Activated T-helper 1 cell treated with anti-CD3 and anti-CD28 coated beads, Interleukin-12 subunit alpha, Interleukin-12 subunit beta, Interleukin-2, Interleukin-4 antibody, amounts not matched to agents 30 ng/mL and 10 ng/mL and 1 ng/mL, durations not matched to agents 14 hours and 24 hours and 36 hours (primary cell): ENCODE measurements at regions of chr10 and their contacts with region 1.

Region 1: DNA sequence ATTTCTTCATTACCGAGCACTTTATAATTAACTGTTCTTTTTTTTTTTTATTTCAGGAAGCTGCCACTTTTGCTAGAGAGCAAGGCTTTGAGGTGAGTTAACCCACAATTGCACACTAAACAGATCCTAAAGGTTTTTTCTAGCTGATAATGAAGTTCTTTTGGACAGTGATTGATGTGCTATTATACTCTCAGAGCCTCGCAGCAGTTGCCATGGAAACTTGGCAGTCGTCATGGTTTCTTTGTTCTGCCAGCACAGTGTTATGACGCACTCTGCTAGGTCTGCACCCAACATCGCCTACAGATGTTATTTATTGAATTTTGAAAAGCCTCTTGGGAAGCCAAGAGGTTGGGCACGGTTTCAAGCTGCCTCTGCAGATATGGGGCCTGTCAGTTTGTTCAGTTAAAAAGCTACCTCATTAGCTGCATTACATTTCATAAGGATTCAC is 237.2 kb upstream of the KAT6B start:
- DNase-seq: peak; percentile 75
- H3K4me3 Mint-ChIP-seq: peak overlapping the region; percentile 54
- H3K27ac Mint-ChIP-seq: peak overlapping the region; percentile 91
- H3K4me1 Mint-ChIP-seq: peaks cover 74% of the 10 kb centered on the region
- H3K27me3 Mint-ChIP-seq: no peaks in the 10 kb centered on the region

Region 2: DNA sequence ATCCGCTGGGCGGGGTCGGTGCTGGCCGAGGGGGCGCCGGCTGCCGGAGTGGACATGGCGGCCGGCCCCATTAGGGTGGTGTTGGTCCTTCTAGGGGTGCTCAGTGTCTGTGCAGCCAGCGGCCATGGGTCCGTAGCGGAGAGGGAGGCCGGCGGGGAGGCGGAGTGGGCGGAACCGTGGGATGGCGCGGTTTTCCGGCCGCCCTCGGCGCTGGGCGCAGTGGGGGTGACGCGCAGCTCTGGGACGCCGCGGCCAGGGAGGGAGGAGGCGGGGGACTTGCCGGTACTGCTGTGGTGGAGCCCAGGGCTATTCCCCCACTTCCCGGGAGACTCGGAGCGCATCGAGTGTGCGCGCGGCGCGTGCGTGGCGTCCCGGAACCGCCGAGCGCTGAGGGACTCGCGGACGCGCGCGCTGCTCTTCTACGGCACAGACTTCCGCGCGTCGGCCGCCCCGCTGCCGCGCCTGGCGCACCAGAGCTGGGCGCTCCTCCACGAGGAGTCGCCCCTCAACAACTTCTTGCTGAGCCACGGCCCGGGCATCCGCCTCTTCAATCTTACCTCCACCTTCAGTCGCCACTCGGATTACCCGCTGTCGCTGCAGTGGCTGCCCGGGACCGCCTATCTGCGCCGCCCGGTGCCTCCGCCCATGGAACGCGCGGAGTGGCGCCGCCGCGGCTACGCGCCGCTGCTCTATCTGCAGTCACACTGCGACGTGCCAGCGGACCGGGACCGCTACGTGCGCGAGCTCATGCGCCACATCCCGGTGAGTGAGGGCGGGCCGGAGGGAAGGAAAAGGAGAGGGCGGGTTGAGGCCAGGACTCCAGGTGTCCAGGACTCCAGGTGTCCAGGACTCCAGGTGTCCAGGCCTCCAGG is 816.7 kb before region 1 on chr10:
- intact Hi-C with region 1: loop called (anchors 5 kb)
- DNase-seq: peak; percentile 85
- H3K4me3 Mint-ChIP-seq: peak overlapping the region; percentile 94
- H3K27ac Mint-ChIP-seq: peak overlapping the region; percentile 91
- H3K4me1 Mint-ChIP-seq: peaks cover 67% of the 10 kb centered on the region
- H3K27me3 Mint-ChIP-seq: no peaks in the 10 kb centered on the region

Region 3: GRCh38 chr10:74262856-74263255 is 326.4 kb before region 1 on chr10:
- intact Hi-C with region 1: loop called (anchors 2 kb)
- DNase-seq: no peak
- H3K4me3 Mint-ChIP-seq: no peak overlapping the region
- H3K27ac Mint-ChIP-seq: no peak overlapping the region
- H3K4me1 Mint-ChIP-seq: peaks cover 13% of the 10 kb centered on the region
- H3K27me3 Mint-ChIP-seq: no peaks in the 10 kb centered on the region

Region 4: GRCh38 chr10:74799721-74800221 is 210.5 kb after region 1 on chr10:
- intact Hi-C with region 1: loop called (anchors 1 kb)
- DNase-seq: peak; percentile 2
- H3K4me3 Mint-ChIP-seq: peak overlapping the region; percentile 3
- H3K27ac Mint-ChIP-seq: peak overlapping the region; percentile 61
- H3K4me1 Mint-ChIP-seq: peaks cover 13% of the 10 kb centered on the region
- H3K27me3 Mint-ChIP-seq: no peaks in the 10 kb centered on the region

Region 5: GRCh38 chr10:75019370-75019769 is 430.1 kb after region 1 on chr10:
- intact Hi-C with region 1: loop called (anchors 2 kb)
- DNase-seq: no peak
- H3K4me3 Mint-ChIP-seq: no peak overlapping the region
- H3K27ac Mint-ChIP-seq: no peak overlapping the region
- H3K4me1 Mint-ChIP-seq: peaks cover 43% of the 10 kb centered on the region
- H3K27me3 Mint-ChIP-seq: no peaks in the 10 kb centered on the region

Region 6: DNA sequence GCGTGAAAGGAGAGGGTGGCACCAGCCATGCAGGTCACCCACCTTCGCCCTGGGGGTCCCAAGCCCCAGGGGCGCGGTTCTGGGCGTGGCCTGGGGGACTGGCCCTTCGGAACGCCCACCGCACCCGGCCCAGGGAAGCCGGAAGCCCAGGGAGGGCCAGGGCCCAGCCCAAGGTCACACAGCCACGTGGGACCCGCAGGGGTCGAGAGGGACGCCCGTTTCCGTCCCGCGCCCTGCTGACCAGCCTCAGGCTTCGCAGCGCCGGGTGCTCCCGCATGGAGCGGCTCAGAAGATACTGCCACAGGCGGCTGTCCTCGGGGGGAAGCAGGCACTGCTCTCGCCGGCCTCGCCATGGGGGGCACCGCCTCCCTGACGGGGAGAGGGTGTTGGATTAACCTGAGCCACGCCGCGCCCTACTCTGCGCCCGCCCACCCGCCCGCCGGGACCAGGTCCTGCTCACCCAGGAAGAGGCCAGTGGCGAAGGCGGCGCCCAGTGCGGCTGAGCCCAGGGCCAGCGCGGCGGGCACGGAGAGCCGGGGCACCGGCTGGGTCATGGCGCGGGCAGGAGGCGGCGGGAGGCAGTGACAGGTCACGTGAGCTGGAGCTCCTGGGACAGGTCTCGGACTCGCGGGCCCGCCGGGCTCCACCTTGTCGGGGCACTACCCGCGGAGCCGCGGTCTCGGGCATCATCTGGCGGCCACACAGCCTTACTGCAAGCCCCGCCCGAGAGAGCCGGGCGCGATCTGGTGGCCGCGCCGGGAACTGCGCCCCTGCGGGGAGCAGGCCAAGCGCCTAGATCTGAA is 646.3 kb after region 1 on chr10 and contains the start of gene COMTD1:
- intact Hi-C with region 1: loop called (anchors 5 kb)
- DNase-seq: peak; percentile 91
- H3K4me3 Mint-ChIP-seq: peak within 1 kb of the TSS; percentile 84
- H3K27ac Mint-ChIP-seq: peak within 1 kb of the TSS; percentile 93
- H3K4me1 Mint-ChIP-seq: peaks cover 27% of the 10 kb centered on the region
- H3K27me3 Mint-ChIP-seq: no peaks in the 10 kb centered on the region
- total RNA-seq, gene COMTD1: 36.4 and 36.9 TPM in 2 replicates